ENCODE measurements at regions of chr1 and their contacts with region 1.

Region 1: DNA sequence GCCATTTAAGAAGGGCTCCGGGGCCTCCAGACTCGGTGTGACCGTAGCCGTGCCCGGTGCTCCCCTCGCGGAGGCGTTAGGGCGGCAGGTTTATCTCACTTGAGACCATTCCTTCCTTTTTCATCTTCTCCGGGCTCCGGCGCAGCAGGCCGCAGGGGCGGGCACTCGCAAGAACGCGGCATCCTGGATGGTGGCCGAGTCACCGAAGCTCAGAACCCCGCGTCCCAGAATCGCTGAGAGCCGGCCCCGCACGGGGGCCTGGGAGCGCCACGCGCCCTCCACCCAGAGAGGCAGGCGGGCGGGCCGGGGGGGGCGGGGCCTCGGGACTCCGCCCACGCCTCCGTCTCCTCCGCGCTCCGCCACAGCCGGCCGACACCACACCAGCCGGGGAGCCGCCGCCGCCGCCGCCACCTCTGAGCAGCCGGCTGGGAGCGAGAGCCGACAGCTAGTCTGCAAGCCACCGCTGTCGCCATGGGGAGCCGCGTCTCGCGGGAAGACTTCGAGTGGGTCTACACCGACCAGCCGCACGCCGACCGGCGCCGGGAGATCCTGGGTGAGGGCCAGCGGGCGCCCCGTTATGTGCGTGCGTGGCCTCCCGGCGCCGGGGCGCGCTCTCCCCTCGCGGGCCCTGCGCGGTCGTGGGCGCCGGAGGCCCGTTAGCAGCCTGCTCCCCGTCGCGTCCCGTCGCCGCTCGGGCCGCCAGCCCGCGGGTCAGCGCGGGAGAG is at the start of gene DEGS1:
- H3K4me3 ChIP-seq: peak within 1 kb of the TSS; percentile 72
- H3K27ac ChIP-seq: peak within 1 kb of the TSS; percentile 99
- H3K4me1 ChIP-seq: peaks cover 3% of the 10 kb centered on the region; the same call in 1 of the 2 replicates
- CTCF ChIP-seq: peak; percentile 36

Region 2: DNA sequence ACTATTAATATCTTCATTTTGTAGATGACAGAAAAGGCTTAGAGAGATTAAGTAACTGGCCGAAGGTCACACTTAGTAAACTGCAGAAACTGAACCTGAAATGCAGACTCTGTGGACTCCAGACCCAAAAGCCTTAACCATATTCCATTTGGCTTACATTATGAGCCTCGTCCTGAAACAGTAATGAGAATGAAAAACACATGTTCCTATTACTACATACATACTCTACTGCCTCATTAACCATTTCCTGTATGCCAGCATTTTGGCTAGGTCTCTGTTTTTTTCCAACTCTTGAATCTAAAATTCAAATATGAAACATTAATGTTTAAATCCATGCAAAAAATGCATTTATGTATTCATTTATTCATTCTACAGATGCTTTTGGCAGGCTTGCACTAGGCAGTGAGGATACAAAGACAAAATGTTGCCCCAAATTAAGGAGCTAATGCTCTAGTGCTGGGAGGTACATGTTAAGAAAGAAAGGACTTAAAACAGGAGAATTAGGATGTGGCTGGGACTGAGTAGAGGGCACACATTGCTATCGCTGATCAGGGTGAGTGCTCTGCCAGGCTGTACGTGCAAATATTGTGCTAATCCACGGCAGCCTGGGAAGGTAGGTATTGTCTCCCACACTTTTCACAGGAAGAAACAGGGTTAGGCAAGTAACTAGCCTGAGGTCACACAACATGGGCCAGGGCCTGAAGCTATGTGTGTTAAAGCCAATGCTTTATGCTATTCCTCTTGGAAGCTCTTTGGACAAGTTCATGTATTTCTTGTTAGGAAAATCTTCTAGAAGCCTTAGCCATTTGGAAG is 14.0 kb after region 1 on chr1:
- CTCF ChIA-PET with region 1: interaction called, 4 read pairs
- POLR2A ChIA-PET with region 1: interaction called, 15 read pairs
- H3K4me3 ChIP-seq: no peak overlapping the region
- H3K27ac ChIP-seq: no peak overlapping the region
- H3K4me1 ChIP-seq: no peaks in the 10 kb centered on the region
- CTCF ChIP-seq: no peak

Region 3: DNA sequence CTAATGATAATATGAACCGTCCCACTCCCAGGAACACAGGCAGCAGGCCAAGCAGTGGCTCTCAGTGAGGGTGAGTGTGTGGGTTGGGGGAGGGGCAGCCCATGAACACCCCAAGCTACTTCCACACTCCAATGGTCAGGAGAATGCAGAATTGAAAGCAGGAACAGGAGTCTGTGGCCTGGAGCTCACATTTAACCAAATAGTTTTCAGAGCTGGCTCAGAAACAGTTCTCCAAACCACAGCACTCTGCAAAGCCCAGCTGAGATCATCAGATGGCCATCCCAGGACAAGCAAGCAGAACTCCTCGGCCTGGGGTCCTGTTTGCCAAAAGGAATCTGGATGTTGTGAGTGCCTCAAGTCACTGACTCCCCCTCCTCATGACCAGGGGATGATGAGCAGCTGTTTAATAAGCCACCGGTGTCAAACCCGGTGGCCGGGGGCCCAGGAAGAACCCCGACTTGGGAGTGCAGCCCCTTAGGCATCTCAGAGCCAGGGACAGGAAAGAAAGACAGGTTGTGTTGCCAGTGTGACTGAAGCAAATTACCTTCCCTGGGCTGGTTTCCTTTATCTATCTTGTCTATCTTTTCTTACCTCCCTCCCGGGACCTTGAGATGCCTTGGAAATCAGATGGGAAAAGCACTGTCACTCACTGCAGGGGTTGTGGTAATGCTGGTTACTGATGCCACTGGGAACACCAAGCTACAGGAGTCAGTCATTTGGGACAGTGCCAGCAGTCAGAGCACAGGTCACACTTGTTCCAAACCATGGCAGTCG is 20.4 kb after region 1 on chr1:
- CTCF ChIA-PET with region 1: no interaction called
- POLR2A ChIA-PET with region 1: interaction called, 40 read pairs
- H3K4me3 ChIP-seq: no peak overlapping the region
- H3K27ac ChIP-seq: 0 out of 2 replicates have a peak overlapping the region, but pooled peaks have one; percentile 1
- H3K4me1 ChIP-seq: peaks cover 25% of the 10 kb centered on the region
- CTCF ChIP-seq: no peak

Region 4: DNA sequence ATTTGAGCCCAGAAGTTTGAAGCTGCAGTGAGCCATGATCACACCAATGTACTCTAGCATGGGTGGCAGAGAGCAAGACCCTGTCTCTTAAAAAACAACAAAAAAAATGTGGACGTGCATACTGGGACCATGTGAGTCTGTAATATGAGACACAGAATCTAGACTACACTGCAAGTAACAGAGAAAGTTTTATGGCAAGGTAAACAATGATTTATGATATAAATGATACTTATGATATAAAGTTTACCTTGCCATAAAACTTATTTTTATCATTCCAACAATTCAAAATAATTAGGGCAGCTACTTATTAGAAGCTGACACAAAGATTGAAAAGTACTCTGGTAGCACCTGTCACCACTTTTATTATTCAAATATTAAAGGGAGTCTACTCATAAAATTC is 216.9 kb after region 1 on chr1:
- CTCF ChIA-PET with region 1: no interaction called
- POLR2A ChIA-PET with region 1: no interaction called
- H3K4me3 ChIP-seq: no peak overlapping the region
- H3K27ac ChIP-seq: no peak overlapping the region
- H3K4me1 ChIP-seq: no peaks in the 10 kb centered on the region; the same call in 1 of the 2 replicates
- CTCF ChIP-seq: no peak